ENCODE measurements at regions of chr1 and their contacts with region 1.

Region 1: GRCh38 chr1:27154991-27155781 is at the start of gene SLC9A1:
- DNase-seq: peak; percentile 92
- CTCF ChIP-seq: peak; percentile 77

Region 2: GRCh38 chr1:27071049-27071416 is 84.2 kb before region 1 on chr1:
- CTCF ChIA-PET with region 1: no interaction called
- POLR2A ChIA-PET with region 1: interaction called, 12 read pairs
- DNase-seq: no peak
- CTCF ChIP-seq: no peak

Region 3: DNA sequence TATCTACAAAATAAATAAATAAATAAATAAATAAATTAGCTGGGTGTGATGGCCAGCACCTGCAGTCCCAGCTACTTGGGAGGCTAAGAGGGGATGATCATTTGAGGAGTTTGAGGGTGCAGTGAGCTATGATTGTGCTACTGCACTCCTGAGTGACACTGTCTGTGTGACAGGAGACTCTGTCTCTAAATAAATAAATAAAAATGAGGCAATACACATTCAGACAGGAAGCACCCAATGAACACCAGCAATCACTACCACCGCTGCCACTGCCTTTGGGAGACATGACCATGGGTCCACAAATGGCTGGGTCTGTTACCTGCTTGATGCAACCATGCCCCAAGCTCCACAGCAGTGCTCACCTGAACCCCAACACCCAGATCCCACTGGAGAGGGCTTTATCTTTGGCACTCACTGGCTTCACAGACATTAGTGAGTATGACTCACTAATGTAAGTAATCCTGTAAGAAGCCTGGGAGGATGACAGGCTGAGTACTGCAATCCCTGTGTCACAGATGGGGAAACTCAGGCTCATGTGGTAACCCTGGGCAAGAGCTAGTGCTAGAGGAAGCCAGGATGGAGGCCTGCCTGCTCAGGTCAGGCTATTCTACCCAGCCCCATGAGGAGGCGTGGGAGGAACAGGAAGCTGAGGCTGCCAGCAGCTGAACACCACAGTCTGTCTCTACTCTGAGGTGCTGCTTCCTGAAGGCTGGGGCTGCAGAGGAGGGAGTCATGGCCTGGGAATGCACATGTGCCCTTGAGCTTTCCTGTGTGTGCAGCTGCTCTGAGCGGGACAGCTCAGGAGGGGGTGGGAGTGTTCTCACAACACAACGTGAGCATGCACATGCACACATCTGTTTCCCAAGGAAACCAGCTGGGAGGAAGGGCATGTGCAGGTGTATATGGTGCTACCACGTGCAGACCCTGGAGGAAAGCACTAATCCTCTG is 43.3 kb before region 1 on chr1:
- CTCF ChIA-PET with region 1: interaction called, 5 read pairs
- POLR2A ChIA-PET with region 1: interaction called, 11 read pairs
- DNase-seq: peak; percentile 87
- CTCF ChIP-seq: peak; percentile 52

Region 4: GRCh38 chr1:27136998-27137542 is 18.1 kb before region 1 on chr1:
- CTCF ChIA-PET with region 1: interaction called, 88 read pairs
- POLR2A ChIA-PET with region 1: interaction called, 110 read pairs
- DNase-seq: peak; percentile 75
- CTCF ChIP-seq: no peak

Region 5: DNA sequence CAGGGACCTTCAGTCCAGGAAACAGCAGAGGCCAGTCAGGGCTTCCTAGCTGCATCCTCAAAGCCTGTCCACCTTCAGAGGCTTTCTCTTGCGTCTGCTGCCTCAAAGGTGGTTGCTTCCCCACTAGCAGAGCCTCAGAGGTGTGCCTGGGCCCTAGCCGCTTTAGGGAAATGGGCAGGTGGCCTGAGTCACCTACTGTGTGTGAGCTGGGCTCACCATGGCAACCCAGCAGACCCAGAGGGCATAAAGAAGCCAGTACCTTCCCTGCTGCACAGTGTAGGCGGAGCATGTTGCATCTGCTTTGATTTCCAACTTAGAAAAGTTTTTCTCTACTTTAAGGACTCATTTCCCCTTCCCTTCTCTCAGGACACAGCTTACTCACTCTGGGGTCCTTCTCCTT is 12.7 kb before region 1 on chr1:
- CTCF ChIA-PET with region 1: interaction called, 88 read pairs
- POLR2A ChIA-PET with region 1: interaction called, 110 read pairs
- DNase-seq: no peak
- CTCF ChIP-seq: no peak

Region 6: DNA sequence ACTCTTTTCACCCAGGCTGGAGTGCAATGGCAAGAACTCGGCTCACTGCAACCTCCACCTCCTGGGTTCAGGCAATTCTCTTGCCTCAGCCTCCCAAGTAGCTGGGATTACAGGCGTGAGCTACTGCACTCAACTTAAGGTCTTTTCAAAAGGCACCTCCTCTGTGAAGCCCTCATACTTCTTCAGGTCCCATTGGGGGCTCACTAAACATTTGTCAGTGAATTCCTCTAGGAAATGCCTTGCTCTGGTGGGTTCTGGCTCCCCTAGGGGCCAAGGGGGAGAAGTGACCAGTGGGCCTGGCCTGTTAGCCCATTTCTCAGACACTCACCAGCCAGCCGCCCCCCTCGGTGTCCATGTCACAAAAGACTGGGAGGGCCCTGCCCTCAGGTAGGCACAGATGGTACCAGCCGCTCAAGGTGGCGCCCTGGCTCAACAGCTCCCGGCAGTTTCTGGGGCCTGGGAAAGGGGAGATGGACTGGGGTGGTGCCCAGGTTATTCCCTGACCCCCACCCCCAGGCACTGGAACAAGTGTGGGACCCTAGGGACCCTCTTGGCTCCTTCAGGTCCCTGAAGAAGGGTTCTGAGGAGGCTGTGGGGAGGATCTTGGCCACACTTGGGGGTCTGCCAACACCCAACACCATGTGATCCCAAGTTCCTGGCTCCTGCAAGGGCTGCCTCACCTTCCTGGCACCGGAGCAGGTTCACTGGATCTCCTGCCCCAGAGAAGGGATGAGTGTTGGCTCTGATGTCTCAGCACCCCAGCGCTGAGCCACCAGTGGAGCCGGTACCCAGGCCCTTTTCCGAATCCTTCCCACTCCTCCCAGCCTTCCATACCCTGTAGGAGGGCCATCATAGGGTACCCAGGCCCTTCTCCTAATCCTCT is 217.9 kb after region 1 on chr1:
- CTCF ChIA-PET with region 1: no interaction called
- POLR2A ChIA-PET with region 1: no interaction called
- DNase-seq: no peak
- CTCF ChIP-seq: no peak

Region 7: DNA sequence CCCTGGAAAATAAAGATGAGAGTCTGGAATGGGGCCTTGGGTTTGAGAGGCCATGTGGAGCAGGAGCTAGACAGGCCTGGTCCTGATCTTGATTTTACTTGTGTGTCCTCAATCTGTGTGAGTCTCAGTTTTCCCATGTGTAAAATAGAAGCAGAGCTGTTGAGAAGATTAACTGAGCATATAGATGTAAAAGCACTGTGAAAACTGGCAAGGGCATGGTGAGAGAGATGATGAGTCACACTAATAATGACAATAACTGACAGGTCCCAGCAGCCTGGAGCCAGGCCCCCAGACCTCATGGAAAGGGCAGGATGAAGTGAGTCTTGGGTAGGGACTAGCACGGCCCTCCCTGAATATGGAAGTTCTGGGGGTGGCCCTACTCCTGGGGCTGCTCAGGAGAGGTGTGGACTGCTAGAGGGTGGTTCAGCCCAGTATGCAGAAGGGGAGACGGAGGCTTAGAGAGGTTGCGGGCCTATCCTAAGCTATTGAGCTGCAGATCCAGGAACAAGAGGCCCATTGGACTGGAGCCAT is 451.6 kb after region 1 on chr1:
- CTCF ChIA-PET with region 1: no interaction called
- POLR2A ChIA-PET with region 1: no interaction called
- DNase-seq: no peak
- CTCF ChIP-seq: no peak

Measured in GM10248 (cell line).